Tibial artery (tissue), 4 donors: ENCODE measurements at regions of chr12 and their contacts with region 1.

Region 1: DNA sequence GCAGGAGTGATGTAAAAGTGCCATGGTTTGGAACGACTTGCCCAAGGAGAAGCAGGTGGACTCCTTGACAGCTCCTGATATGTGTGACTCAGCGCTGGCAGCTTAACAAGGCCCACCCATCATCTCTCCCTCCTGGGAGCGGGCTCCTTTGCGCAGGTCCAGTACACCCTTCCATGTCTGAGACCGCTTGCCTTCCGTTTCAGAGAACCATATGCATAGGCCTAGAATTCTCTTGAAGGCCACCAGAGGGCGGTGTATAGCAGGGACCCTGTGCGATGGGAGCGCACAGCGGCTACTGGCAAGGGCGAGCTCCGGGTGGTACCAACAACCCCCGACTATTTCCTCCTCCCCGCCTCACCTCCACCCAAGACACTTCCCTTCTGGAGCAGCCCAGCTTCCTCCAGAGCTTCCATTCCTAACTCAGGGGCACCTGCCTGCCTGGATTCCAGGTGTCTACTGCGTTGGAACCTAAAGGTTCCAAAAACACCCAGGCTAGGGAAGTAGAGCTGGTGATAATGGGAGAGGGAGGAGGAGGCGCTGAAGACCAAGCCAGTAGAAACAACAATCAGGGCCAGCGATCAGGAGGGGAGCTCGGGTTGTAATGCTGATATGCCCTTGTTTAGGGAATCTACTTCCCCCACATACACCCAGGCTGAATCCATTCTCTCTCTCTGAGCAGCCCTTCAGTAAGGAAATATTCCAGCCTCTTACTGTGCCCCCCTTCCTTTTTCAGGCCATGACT is 6.2 kb downstream of the DHH start:
- DNase-seq: peak; percentile 51 to 84
- H3K4me3 ChIP-seq: peak overlapping the region in 1 of 2 donors; percentile 7
- H3K27ac ChIP-seq: no peak overlapping the region
- H3K4me1 ChIP-seq: peaks cover 0 to 38% (median 35%) of the 10 kb centered on the region in 4 donors
- H3K27me3 ChIP-seq: peaks cover 0 to 47% of the 10 kb centered on the region in 2 donors
- CTCF ChIP-seq: peak; percentile 87 to 91

Region 2: GRCh38 chr12:49031553-49032162 is 56.7 kb before region 1 on chr12:
- intact Hi-C with region 1: no loop called
- DNase-seq: peak in 1 of 2 donors; percentile 67
- H3K4me3 ChIP-seq: no peak overlapping the region
- H3K27ac ChIP-seq: no peak overlapping the region
- H3K4me1 ChIP-seq: no peaks in the 10 kb centered on the region
- H3K27me3 ChIP-seq: no peaks in the 10 kb centered on the region
- CTCF ChIP-seq: no peak

Region 3: DNA sequence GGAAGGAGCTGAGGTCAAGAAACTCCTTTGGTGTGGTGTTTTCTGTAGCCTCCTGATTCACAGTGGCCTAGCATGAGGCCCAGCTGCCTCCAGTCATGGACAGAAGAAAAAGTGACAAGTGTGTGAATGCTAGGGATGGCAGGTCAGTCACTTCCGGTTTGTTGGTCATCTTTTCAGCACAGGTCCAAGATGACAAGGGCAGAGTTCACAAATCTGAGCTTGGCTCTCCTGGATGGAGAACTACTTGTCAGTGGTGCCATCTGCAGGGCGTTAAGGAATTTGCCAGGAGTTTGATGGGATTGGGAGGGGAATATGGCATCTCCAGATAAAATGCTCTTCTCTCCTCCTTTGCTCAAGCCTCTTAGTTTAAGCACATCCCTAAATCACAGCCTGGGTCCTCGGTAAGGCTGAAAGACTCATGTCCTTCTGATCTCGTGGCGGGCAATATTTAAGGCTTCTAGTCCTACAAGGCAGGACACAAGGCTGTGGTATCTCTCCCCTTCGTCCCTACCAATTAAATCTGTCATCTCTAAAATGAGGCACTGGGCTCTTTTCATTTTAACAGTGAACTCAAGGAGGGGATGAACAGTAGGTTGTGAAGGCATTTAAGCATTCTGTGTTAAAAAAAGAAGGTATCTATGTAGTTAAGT is 32.8 kb after region 1 on chr12:
- intact Hi-C with region 1: loop called (anchors 5 kb)
- DNase-seq: peak in 1 of 2 donors; percentile 39
- H3K4me3 ChIP-seq: no peak overlapping the region
- H3K27ac ChIP-seq: no peak overlapping the region
- H3K4me1 ChIP-seq: no peaks in the 10 kb centered on the region
- H3K27me3 ChIP-seq: no peaks in the 10 kb centered on the region
- CTCF ChIP-seq: peak; percentile 54 to 60